ENCODE measurements at regions of chr21 and their contacts with region 1.

Region 1: DNA sequence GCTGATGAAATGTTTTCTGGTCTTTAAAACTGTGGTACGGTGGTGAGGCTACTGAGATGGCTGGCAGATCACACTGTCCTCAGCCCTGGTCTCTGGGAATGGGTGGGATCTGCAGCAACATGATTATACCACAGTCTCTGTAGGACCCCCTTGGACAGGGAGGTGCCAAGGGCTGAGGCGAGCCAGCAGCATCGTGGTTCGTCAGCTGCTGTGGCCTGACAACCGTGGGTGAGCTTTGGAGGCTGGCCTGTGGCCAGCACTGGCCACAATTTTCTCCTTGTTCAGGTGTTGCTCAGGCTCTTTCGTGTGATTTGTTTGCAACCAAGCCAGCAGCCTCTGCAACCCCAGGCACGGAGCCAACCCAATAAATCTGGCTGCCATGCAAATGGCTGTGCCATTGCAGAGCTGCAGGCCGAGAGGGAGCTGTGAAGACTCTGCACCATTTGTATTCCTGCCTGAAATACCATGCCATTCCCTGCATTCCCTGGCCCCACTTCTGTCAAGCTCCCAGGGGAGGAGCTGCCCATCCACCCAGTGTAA is 70.9 kb downstream of the PCP4 start:
- DNase-seq: no peak
- H3K4me3 ChIP-seq: no peak overlapping the region
- H3K27ac ChIP-seq: no peak overlapping the region
- H3K4me1 ChIP-seq: no peaks in the 10 kb centered on the region
- H3K27me3 ChIP-seq: no peaks in the 10 kb centered on the region
- CTCF ChIP-seq: no peak

Region 2: DNA sequence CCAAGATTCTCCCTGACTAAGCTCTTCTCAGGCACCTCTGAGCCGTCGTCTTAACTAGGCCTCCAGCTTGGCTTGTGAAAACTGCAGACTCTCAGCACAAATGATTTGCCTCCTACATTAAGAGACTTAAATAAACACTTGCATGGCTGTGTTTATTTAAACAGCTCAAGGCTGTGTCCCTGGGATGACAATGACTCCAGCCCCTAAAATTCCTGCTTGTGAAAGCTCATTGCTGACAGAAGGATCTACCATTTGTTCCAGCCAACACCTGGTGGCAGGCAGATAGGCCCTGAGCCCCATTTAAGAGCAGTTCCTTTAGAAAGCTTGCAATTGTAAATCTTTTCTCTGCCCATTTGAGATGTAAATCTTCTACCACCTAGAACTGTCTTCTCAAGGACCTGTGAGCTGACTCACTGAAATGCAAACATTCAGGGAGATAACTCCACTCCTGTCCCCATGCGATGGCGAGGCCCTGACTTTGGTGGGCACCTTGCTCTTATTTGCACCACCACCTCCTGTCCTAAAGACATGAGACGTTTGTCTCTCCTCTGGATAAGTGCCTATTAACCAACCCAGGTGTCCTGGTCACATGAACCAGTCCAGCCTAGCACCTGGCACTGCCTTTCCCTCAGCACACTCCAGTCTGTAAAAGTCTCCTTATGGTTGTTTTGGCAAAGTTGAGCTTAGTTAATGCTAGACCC is 86.0 kb before region 1 on chr21:
- CTCF ChIA-PET with region 1: no interaction called
- dilution Hi-C with region 1: loop called (anchors 5 kb)
- in situ Hi-C with region 1: no loop called
- intact Hi-C with region 1: no loop called
- DNase-seq: no peak
- H3K4me3 ChIP-seq: no peak overlapping the region
- H3K27ac ChIP-seq: no peak overlapping the region
- H3K4me1 ChIP-seq: no peaks in the 10 kb centered on the region
- H3K27me3 ChIP-seq: no peaks in the 10 kb centered on the region
- CTCF ChIP-seq: no peak

Region 3: DNA sequence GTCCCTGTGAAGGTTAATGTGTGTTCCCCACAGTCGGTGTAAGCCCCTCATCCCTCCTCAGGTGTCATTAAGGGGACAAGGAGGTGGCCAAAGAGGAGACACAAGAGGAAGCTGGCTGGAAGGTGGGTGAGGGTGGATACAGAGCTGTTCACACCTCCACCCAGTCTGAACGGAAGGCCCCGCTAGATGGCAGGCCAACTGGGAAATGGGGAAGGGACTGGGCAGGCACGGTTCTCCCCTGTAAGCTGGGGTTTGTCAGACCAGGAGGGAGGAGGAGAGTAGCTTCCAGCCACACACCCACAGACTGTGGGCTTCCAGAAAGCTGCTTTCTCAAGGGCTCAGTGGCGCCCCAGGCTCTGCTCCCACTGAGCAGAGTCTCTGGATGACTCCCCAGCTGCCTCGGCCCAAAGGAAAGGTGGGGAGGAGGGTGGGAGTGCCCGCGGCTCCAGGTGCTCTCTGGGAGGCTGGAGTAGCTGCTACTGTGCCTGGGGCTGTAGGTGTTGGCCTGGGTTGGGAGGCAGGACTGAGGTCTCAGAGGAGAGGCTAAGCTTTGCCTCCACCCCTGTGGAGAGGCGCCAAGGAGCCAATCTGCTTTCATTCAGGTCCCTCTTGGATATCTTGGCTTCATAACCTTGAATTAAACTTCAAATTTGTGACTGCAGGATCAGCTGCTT is 29.8 kb before region 1 on chr21:
- CTCF ChIA-PET with region 1: no interaction called
- dilution Hi-C with region 1: loop called (anchors 5 kb)
- in situ Hi-C with region 1: no loop called
- intact Hi-C with region 1: no loop called
- DNase-seq: no peak
- H3K4me3 ChIP-seq: no peak overlapping the region
- H3K27ac ChIP-seq: no peak overlapping the region
- H3K4me1 ChIP-seq: no peaks in the 10 kb centered on the region
- H3K27me3 ChIP-seq: no peaks in the 10 kb centered on the region
- CTCF ChIP-seq: no peak